ENCODE measurements at regions of chr11 and their contacts with region 1.

Region 1: DNA sequence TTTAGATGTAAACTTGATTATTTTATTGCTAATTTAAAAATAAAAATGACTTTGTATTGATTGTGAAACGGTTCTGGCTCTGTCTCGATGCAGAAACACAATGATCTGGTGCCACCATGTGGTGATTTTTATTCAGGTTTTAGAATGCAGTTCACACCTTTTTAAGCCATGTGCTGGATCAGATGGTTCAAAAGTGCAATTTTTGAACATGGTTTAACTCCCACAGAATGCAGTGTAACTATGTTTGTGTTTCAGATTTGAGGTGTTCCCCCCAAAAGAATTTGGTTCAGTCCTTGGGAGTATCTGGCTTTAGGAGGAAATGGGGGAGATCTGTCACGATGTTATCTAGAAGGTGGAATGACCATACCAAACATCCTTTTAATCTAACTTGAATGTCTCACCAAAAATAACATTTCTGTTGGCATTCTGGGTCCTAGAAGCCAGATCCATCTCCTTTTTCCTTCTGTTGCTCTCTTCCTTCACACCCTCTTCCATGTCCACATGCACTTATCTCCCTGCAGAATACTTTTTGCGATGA is 7.9 kb downstream of the MRPL16 start:
- DNase-seq: no peak
- H3K4me3 ChIP-seq: no peak overlapping the region
- H3K27ac ChIP-seq: peak overlapping the region in 1 of 4 donors; percentile 35
- H3K4me1 ChIP-seq: no peaks in the 10 kb centered on the region
- H3K27me3 ChIP-seq: no peaks in the 10 kb centered on the region
- CTCF ChIP-seq: peak; percentile 25 to 72 (median 54)
- EP300 ChIP-seq: no peak
- POLR2A ChIP-seq: no peak

Region 2: DNA sequence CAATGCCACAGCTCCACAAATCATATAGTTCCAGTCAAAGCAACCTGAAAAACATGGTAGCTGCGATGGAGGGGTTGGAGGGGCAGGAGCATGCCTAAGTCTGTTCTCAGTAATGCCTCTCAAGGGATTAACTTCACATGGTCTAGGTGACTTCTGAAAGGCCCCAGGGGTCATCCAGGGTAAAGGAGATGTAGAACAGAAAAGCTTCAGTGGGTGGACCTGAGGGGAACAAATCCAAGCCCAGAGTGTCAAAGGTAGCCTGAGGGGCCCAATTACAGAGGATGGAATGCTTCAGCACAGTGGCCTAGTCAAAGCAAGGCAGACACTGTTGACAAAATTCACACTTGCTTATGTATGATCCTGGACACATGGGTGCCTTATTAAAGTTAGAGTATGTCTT is 268.0 kb before region 1 on chr11:
- intact Hi-C with region 1: loop called (anchors 10 kb)
- DNase-seq: no peak
- H3K4me3 ChIP-seq: no peak overlapping the region
- H3K27ac ChIP-seq: no peak overlapping the region
- H3K4me1 ChIP-seq: peaks cover 0 to 14% (median 7%) of the 10 kb centered on the region in 4 donors
- H3K27me3 ChIP-seq: no peaks in the 10 kb centered on the region
- CTCF ChIP-seq: no peak
- EP300 ChIP-seq: no peak
- POLR2A ChIP-seq: no peak

Region 3: GRCh38 chr11:59601788-59602187 is 200.9 kb before region 1 on chr11:
- intact Hi-C with region 1: no loop called
- DNase-seq: no peak
- H3K4me3 ChIP-seq: no peak overlapping the region
- H3K27ac ChIP-seq: no peak overlapping the region
- H3K4me1 ChIP-seq: peaks cover 0 to 10% (median 0%) of the 10 kb centered on the region in 4 donors
- H3K27me3 ChIP-seq: no peaks in the 10 kb centered on the region
- CTCF ChIP-seq: no peak
- EP300 ChIP-seq: no peak
- POLR2A ChIP-seq: no peak

Region 4: GRCh38 chr11:59957094-59957493 is 154.4 kb after region 1 on chr11:
- intact Hi-C with region 1: no loop called
- DNase-seq: no peak
- H3K4me3 ChIP-seq: no peak overlapping the region
- H3K27ac ChIP-seq: no peak overlapping the region
- H3K4me1 ChIP-seq: peaks cover 0 to 6% (median 0%) of the 10 kb centered on the region in 4 donors
- H3K27me3 ChIP-seq: no peaks in the 10 kb centered on the region
- CTCF ChIP-seq: no peak
- EP300 ChIP-seq: no peak
- POLR2A ChIP-seq: no peak

Measured in sigmoid colon (tissue), 7 donors.